ENCODE measurements at regions of chr6 and their contacts with region 1.

Region 1: GRCh38 chr6:139124887-139125672 is 9.8 kb upstream of the HECA start:
- DNase-seq: peak; percentile 77
- H3K4me3 Mint-ChIP-seq: peak overlapping the region; percentile 47
- H3K27ac Mint-ChIP-seq: peak overlapping the region; percentile 92
- H3K4me1 Mint-ChIP-seq: peaks cover 33% of the 10 kb centered on the region
- H3K27me3 Mint-ChIP-seq: no peaks in the 10 kb centered on the region

Region 2: GRCh38 chr6:138773177-138774091 is 351.6 kb before region 1 on chr6 and contains the start of gene CCDC28A:
- intact Hi-C with region 1: loop called (anchors 1 kb)
- DNase-seq: peak; percentile 89
- H3K4me3 Mint-ChIP-seq: peak within 1 kb of the TSS; percentile 99
- H3K27ac Mint-ChIP-seq: peak within 1 kb of the TSS; percentile 100
- H3K4me1 Mint-ChIP-seq: peaks cover 23% of the 10 kb centered on the region
- H3K27me3 Mint-ChIP-seq: no peaks in the 10 kb centered on the region
- total RNA-seq, gene CCDC28A: 16.1 and 17.9 TPM in 2 replicates

Region 3: GRCh38 chr6:139109558-139109957 is 15.5 kb before region 1 on chr6:
- intact Hi-C with region 1: loop called (anchors 1 kb)
- DNase-seq: no peak
- H3K4me3 Mint-ChIP-seq: no peak overlapping the region
- H3K27ac Mint-ChIP-seq: no peak overlapping the region
- H3K4me1 Mint-ChIP-seq: peaks cover 22% of the 10 kb centered on the region
- H3K27me3 Mint-ChIP-seq: no peaks in the 10 kb centered on the region

Region 4: DNA sequence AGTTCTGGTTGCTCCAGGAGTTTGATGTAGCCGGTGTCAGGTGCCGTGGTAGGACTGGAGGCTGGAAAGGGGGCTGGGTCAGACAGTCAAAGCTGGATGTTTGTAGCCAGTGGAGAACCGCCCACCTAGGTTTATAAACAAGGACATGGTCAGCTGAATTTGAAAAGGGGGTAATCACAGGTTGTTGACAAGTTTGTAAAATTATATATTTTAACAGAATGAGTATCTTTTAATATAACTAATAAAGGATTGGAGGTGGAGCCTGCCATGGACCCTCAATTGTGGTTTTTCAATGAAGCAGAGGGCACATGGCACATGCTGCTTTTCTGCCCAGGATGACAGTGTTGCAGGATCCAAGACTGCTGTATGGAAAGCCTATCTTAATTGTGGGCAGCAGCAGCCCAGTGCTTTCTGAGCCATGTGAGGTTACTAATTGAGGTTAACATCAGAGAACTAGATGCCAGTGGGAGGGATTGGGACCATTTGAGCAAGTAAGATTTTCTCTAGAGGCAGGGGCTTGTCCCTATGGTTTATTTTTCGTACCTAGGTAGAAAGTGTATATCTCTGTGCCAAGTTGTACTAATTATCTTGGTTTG is 19.5 kb after region 1 on chr6:
- intact Hi-C with region 1: no loop called
- DNase-seq: no peak
- H3K4me3 Mint-ChIP-seq: peak overlapping the region; percentile 65
- H3K27ac Mint-ChIP-seq: peak overlapping the region; percentile 85
- H3K4me1 Mint-ChIP-seq: peaks cover 87% of the 10 kb centered on the region
- H3K27me3 Mint-ChIP-seq: no peaks in the 10 kb centered on the region

Region 5: GRCh38 chr6:139161817-139162284 is 36.8 kb after region 1 on chr6:
- intact Hi-C with region 1: loop called (anchors 1 kb)
- DNase-seq: peak; percentile 72
- H3K4me3 Mint-ChIP-seq: peak overlapping the region; percentile 68
- H3K27ac Mint-ChIP-seq: peak overlapping the region; percentile 97
- H3K4me1 Mint-ChIP-seq: peaks cover 71% of the 10 kb centered on the region
- H3K27me3 Mint-ChIP-seq: no peaks in the 10 kb centered on the region

Region 6: DNA sequence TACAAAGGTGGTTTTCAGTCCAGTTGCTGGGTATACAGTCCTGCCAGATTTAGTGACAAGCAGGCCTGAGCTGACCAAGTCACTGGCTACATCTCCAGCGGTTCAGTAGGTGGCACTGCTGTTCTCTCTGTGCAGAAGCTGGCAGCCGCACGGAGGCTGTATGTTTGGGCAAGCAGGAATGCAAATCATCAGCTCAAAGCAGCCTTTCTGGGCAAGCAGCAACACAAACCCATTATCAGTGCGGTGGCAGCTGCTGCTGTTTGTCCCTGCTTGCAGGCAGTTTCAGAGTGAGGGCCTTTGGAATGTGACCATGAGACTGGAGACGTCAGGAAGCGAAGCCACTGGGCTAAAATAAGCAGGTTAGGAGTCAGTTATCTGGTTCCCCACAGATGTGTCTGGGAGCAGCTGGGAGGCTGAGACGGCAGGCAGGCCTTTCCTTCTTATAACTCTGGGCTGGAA is 94.2 kb after region 1 on chr6:
- intact Hi-C with region 1: loop called (anchors 1 kb)
- DNase-seq: peak; percentile 62
- H3K4me3 Mint-ChIP-seq: peak overlapping the region; percentile 38
- H3K27ac Mint-ChIP-seq: peak overlapping the region; percentile 61
- H3K4me1 Mint-ChIP-seq: peaks cover 10% of the 10 kb centered on the region
- H3K27me3 Mint-ChIP-seq: no peaks in the 10 kb centered on the region

Measured in activated T-helper 1 cell treated with anti-CD3 and anti-CD28 coated beads, Interleukin-12 subunit alpha, Interleukin-12 subunit beta, Interleukin-2, Interleukin-4 antibody, amounts not matched to agents 30 ng/mL and 10 ng/mL and 1 ng/mL, durations not matched to agents 14 hours and 24 hours and 36 hours (primary cell).